ENCODE measurements at regions of chr1 and their contacts with region 1.

Region 1: DNA sequence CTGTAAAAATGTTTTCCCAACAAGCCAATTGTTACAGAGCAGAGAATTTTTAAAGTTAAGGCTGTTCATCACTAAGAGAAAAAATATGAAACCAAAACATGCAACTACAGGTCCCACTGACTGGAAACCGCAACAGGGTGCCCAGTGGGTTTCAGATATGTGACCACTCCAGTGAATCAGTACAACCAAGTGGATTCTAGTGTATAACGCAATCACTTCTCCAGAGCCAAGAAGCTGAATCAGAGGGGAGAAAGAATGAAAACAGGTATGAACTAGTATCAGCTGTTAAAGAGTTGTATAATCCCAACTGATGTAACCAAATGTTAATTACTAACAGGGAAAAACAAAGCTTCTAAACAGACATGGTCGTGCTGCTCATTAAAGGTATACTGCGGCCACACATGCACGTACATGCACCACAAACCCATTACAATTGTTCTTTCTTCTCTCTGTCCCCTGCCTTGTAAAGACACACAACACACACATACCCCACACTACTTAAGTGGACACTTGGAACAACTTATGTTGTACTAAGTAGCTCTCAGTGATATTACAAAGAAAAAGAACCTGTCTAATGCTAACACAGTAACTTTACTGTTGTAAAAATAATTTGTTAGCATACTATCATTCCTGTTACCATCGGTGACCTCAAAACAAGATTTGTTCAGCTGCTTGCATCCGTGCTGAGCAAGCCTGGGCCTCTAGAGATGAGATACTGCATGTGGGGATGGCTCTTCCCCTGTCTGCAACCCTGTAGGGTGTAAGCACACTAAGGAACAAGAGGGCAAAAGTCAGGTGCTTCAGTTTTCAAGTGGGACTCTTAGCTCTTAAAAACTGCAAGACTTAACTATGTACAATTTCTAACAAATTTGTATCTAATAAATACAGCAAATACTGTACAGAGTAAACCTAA is 74.2 kb downstream of the PTPN14 start:
- DNase-seq: peak; percentile 100
- H3K4me3 Mint-ChIP-seq: peak overlapping the region; percentile 65
- H3K27ac Mint-ChIP-seq: peak overlapping the region; percentile 88
- H3K4me1 Mint-ChIP-seq: peaks cover 68% of the 10 kb centered on the region
- H3K27me3 Mint-ChIP-seq: no peaks in the 10 kb centered on the region
- CTCF ChIP-seq: no peak

Region 2: DNA sequence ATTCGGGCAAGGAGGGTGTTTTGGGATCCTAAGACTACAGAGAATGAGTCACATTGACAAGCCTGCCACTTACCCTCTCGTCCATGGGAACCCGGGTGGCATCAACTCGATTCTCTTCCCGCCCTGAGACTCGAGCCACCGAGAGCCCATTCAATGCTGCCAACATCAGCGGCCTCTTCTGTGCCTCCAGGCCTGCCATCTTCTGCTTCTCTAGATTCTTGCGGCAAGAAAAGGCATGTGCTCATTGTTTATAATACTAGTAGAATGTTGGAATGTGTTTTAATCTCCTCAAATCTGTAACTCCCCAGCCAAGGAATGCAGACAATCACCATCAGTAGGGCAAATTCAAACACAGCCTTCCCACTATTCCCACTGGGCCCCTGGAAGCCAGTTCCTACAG is 99.3 kb before region 1 on chr1:
- CTCF ChIA-PET with region 1: no interaction called
- POLR2A ChIA-PET with region 1: interaction called, 10 read pairs
- intact Hi-C with region 1: no loop called
- DNase-seq: no peak
- H3K4me3 Mint-ChIP-seq: no peak overlapping the region
- H3K27ac Mint-ChIP-seq: peak overlapping the region; percentile 47
- H3K4me1 Mint-ChIP-seq: peaks cover 11% of the 10 kb centered on the region
- H3K27me3 Mint-ChIP-seq: no peaks in the 10 kb centered on the region
- CTCF ChIP-seq: no peak

Region 3: GRCh38 chr1:214422137-214422671 is 55.0 kb before region 1 on chr1:
- CTCF ChIA-PET with region 1: interaction called, 19 read pairs
- POLR2A ChIA-PET with region 1: interaction called, 112 read pairs
- intact Hi-C with region 1: loop called (anchors 10 kb)
- DNase-seq: peak; percentile 84
- H3K4me3 Mint-ChIP-seq: peak overlapping the region; percentile 6
- H3K27ac Mint-ChIP-seq: peak overlapping the region; percentile 80
- H3K4me1 Mint-ChIP-seq: peaks cover 77% of the 10 kb centered on the region
- H3K27me3 Mint-ChIP-seq: no peaks in the 10 kb centered on the region
- CTCF ChIP-seq: no peak

Region 4: DNA sequence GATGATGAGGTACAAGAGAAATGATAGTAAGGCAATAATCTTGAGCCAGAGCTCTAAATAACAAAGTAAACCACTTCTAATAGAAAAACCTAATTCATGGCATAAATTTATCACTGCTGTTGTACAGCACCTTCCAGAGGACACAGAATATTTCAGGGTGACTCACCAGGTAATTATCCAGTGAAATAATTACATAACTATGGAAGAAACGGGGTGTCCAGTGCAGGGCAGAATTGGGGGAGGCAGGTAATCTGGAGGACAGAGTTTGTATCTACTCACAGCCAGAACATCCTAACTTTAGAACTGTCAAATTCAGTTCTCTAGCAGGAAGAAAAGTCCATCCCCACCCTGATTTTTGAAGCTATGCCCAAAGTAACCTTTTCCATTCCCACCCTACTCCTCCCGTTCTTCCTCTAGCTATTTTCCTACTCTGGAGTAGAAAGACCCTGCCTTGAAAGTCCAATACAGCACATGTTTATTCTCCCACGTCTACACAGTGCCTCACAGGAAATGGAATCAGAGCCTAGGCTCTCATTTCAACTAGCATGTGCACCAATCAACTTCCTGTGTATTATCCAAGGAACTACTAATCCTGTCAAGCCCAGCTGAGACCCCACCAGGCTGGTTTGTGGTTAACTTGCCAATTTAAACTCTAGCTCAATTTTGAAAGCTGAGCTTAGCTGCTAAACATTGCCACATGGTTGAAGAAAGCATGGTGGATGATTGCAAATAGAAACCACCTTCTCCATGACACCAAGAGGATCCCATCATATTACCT is 22.4 kb before region 1 on chr1:
- CTCF ChIA-PET with region 1: interaction called, 68 read pairs
- POLR2A ChIA-PET with region 1: interaction called, 843 read pairs
- intact Hi-C with region 1: no loop called
- DNase-seq: peak; percentile 60
- H3K4me3 Mint-ChIP-seq: no peak overlapping the region
- H3K27ac Mint-ChIP-seq: peak overlapping the region; percentile 42
- H3K4me1 Mint-ChIP-seq: peaks cover 66% of the 10 kb centered on the region
- H3K27me3 Mint-ChIP-seq: no peaks in the 10 kb centered on the region
- CTCF ChIP-seq: no peak

Region 5: DNA sequence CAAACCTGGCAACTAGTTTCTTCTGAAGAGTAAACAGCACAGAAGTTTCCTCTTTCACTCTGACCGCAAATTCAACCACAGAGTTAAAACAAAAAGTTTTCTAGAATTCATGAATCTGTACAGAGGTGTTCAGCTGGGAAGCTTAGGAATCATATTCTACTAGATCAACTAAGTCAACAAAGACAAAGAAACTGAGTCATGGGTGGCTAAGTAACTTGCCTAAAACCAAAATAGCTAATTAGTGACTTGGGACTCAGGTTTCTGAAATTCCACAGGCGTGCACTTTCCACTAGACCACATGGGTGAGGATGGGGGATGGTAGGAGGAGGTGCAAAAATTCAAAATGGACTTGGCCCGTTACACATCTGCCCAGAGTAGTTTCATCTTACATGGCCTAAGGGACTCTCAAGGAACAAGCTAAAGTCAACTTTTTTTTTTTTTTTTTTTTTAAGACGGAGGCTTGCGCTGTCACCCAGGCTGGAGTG is 48.4 kb after region 1 on chr1:
- CTCF ChIA-PET with region 1: interaction called, 6 read pairs
- POLR2A ChIA-PET with region 1: interaction called, 19 read pairs
- intact Hi-C with region 1: no loop called
- DNase-seq: peak; percentile 75
- H3K4me3 Mint-ChIP-seq: peak overlapping the region; percentile 4
- H3K27ac Mint-ChIP-seq: peak overlapping the region; percentile 63
- H3K4me1 Mint-ChIP-seq: peaks cover 48% of the 10 kb centered on the region
- H3K27me3 Mint-ChIP-seq: no peaks in the 10 kb centered on the region
- CTCF ChIP-seq: no peak

Region 6: DNA sequence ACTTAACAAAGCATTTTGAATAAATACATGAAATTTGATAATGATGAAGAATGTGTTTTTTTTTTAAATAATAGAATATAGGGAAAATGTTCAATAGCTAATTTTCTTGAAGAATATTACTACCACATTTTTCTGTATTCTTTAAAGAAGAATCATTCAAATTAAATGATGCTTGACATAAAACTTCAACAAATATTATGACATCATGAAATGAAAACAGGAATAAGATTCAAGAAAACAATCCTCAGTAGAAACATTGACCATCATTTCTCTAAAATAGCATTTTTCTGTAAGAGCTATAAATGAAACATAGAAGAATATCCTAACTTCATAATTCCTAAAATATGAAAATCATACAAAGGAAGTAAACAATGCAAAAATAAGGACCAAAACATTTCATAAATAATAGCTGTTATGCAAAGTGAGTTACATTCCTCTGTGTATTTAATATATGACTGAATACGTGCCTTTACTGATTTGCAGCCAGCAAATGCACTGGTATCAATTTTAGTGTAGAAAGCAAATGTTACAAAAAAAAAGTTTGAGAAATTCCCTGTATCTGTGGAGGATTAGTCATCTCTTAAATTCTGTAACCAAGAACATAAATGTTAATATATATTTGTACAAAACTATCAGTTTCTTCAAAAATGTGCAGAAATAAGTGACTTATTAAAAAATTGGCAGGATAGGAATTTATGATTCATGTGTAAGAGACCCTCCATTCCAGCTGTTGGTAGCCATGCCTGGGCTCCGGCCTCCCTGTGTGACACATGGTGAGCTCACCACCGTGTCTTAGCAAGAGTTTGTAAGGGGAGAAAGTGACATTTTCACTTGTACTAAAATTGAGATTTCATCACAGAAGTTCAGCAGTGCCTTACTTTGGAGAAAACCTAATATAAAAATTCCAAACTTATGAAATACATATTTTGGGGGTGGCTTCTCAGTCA is 89.2 kb after region 1 on chr1:
- CTCF ChIA-PET with region 1: interaction called, 3 read pairs
- POLR2A ChIA-PET with region 1: interaction called, 536 read pairs
- intact Hi-C with region 1: no loop called
- DNase-seq: peak; percentile 85
- H3K4me3 Mint-ChIP-seq: no peak overlapping the region
- H3K27ac Mint-ChIP-seq: peak overlapping the region; percentile 36
- H3K4me1 Mint-ChIP-seq: peaks cover 51% of the 10 kb centered on the region
- H3K27me3 Mint-ChIP-seq: no peaks in the 10 kb centered on the region
- CTCF ChIP-seq: no peak

Region 7: DNA sequence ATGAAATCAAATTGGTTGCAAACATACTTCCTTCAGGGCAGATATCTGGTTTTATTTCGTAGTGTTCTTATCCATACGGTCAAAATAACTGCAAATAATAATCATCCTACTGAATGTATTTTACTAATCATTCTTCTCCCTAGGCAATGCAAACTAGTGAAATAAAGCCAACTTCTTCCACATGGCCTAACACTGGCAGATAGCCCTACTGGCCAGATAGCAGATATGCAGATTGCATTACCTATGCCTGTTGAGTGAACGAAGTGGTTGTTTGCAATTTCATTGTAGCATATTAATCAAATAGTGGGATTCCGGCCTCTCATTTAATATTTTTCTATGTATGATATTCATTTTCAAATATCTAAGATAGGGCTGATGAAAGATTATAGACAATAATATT is 242.0 kb after region 1 on chr1:
- CTCF ChIA-PET with region 1: no interaction called
- POLR2A ChIA-PET with region 1: no interaction called
- intact Hi-C with region 1: no loop called
- DNase-seq: no peak
- H3K4me3 Mint-ChIP-seq: no peak overlapping the region
- H3K27ac Mint-ChIP-seq: no peak overlapping the region
- H3K4me1 Mint-ChIP-seq: peaks cover 5% of the 10 kb centered on the region
- H3K27me3 Mint-ChIP-seq: peaks cover 46% of the 10 kb centered on the region
- CTCF ChIP-seq: no peak